Activated T-helper 2 cell treated with anti-CD3 and anti-CD28 coated beads, Interferon-gamma antibody, Interleukin-2, Interleukin-4, amounts not matched to agents 10 μg/mL and 5 μg/mL and 100 μg/mL, durations not matched to agents 14 hours and 24 hours and 36 hours (primary cell): ENCODE measurements at regions of chr10 and their contacts with region 1.

Region 1: DNA sequence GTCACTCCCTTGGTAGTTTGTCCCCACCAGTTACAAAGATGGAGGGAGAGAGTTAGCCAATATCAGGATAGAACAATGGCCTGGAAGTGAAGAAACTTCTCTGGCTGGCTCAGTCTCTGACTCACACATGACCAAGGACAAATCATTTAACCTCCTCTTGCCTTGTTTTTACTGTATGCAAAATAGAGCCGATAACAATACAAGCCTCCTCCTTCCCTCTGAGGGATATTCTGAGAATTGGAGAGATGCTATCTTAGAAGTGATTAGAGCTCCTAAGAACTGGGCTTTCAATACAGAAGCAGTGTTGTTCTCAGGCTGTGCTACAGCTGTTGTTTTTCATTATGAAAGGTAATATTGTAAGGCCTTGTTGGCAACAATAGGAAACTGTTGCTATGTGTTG is 87.7 kb upstream of the EGR2 start:
- DNase-seq: no peak
- H3K4me3 Mint-ChIP-seq: no peak overlapping the region
- H3K27ac Mint-ChIP-seq: peak overlapping the region; percentile 34
- H3K4me1 Mint-ChIP-seq: peaks cover 25% of the 10 kb centered on the region
- H3K27me3 Mint-ChIP-seq: peaks cover 2% of the 10 kb centered on the region

Region 2: DNA sequence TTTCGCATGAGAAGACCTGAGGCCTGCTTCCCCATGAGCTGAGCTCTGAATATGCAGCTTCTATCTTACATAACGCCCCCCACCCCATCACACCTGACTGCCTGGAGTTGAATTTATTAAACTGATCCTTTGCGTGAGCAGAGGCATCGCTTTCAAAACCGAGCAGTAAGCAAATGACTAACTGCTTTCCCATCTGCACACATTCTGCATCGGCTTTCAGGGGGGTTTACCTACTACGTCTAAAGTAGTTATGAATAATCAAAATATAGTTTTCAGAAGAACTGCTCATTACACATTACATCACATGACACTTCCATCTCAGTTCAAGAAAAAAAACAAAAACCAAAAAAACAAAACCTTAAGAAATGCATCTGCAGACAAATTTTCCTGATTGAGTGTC is 33.0 kb before region 1 on chr10:
- intact Hi-C with region 1: loop called (anchors 2 kb)
- DNase-seq: no peak
- H3K4me3 Mint-ChIP-seq: no peak overlapping the region
- H3K27ac Mint-ChIP-seq: peak overlapping the region; percentile 5
- H3K4me1 Mint-ChIP-seq: peaks cover 33% of the 10 kb centered on the region
- H3K27me3 Mint-ChIP-seq: no peaks in the 10 kb centered on the region

Region 3: DNA sequence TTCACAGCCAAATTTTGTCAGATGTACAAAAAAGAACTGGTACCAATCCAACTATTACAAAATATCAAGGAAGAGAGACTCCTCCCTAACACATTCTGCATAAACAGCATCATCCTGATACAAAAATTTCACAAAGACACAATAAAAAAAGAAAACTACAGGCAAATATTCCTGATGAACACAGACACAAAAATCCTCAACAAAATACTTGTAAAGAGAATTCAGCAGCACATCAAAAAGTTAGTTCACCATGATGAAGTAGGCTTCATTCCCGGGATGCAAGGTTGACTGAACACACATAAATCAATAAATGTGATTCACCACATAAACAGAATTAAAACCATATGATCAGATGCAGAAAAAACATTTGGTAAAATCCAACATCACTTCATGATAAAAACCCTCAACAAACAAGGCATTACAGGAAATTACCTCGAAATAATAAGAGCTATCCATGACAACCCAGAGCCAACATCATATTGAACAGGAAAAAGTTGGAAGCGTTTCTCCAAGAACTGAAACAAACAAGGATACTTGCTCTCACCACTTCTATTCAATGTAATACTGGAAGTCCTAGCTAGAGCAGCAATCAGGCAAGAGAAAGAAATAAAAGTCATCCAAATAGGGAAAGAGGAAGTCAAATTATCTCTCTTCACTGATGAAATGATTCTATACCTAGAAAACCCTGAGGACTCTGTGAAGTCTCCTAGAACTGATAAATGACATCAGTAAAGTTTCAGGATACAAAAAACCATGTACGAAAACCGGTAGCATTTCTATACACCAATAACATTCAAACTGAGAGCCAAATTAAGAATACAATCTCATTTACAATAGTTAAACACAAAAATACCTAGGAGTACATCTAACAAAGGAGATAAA is 840.5 kb after region 1 on chr10:
- intact Hi-C with region 1: no loop called
- DNase-seq: no peak
- H3K4me3 Mint-ChIP-seq: no peak overlapping the region
- H3K27ac Mint-ChIP-seq: no peak overlapping the region
- H3K4me1 Mint-ChIP-seq: no peaks in the 10 kb centered on the region
- H3K27me3 Mint-ChIP-seq: peaks cover 12% of the 10 kb centered on the region